ENCODE measurements at regions of chr1 and their contacts with region 1.

Region 1: GRCh38 chr1:6438047-6438525 is 13.5 kb downstream of the ESPN start:
- DNase-seq: peak; percentile 66
- ATAC-seq: peak; percentile 79
- H3K4me3 ChIP-seq: no peak overlapping the region
- H3K27ac ChIP-seq: no peak overlapping the region
- H3K4me1 ChIP-seq: peaks cover 30% of the 10 kb centered on the region
- H3K27me3 ChIP-seq: peaks cover 6 to 31% of the 10 kb centered on the region in 2 experiments
- CTCF ChIP-seq: peak; percentile 93
- EP300 ChIP-seq: no peak
- POLR2A ChIP-seq: no peak
- RAD21 ChIP-seq: peak; percentile 76

Region 2: GRCh38 chr1:5798151-5798730 is 639.8 kb before region 1 on chr1:
- CTCF ChIA-PET with region 1: no interaction called
- POLR2A ChIA-PET with region 1: no interaction called
- in situ Hi-C with region 1: no loop called
- intact Hi-C with region 1: loop called (anchors 10 kb)
- DNase-seq: peak; percentile 55
- ATAC-seq: peak; percentile 94
- H3K4me3 ChIP-seq: no peak overlapping the region
- H3K27ac ChIP-seq: no peak overlapping the region
- H3K4me1 ChIP-seq: peaks cover 14% of the 10 kb centered on the region; the same call in 1 of the 2 replicates
- H3K27me3 ChIP-seq: peaks cover 0 to 23% of the 10 kb centered on the region in 2 experiments; a peak in 2 of 5 replicates
- CTCF ChIP-seq: no peak
- EP300 ChIP-seq: no peak
- POLR2A ChIP-seq: no peak
- RAD21 ChIP-seq: no peak

Region 3: GRCh38 chr1:6423321-6423999 is 14.6 kb before region 1 on chr1:
- CTCF ChIA-PET with region 1: interaction called, 12 read pairs
- POLR2A ChIA-PET with region 1: interaction called, 3 read pairs
- in situ Hi-C with region 1: no loop called
- intact Hi-C with region 1: no loop called
- DNase-seq: no peak
- ATAC-seq: peak; percentile 75
- H3K4me3 ChIP-seq: peak overlapping the region in 1 of 3 experiments; percentile 46; a peak in 1 of 6 replicates
- H3K27ac ChIP-seq: no peak overlapping the region
- H3K4me1 ChIP-seq: peaks cover 43% of the 10 kb centered on the region
- H3K27me3 ChIP-seq: peaks cover 41 to 90% of the 10 kb centered on the region in 2 experiments
- CTCF ChIP-seq: peak; percentile 93
- EP300 ChIP-seq: no peak
- POLR2A ChIP-seq: no peak
- RAD21 ChIP-seq: peak; percentile 63

Region 4: GRCh38 chr1:6523566-6523965 is 85.5 kb after region 1 on chr1:
- CTCF ChIA-PET with region 1: no interaction called
- POLR2A ChIA-PET with region 1: no interaction called
- in situ Hi-C with region 1: no loop called
- intact Hi-C with region 1: no loop called
- DNase-seq: peak; percentile 65
- ATAC-seq: peak; percentile 81
- H3K4me3 ChIP-seq: no peak overlapping the region
- H3K27ac ChIP-seq: no peak overlapping the region
- H3K4me1 ChIP-seq: no peaks in the 10 kb centered on the region
- H3K27me3 ChIP-seq: no peaks in the 10 kb centered on the region
- CTCF ChIP-seq: peak; percentile 81
- EP300 ChIP-seq: no peak
- POLR2A ChIP-seq: no peak
- RAD21 ChIP-seq: no peak; the same call in 1 of the 2 replicates